Natural killer cell (primary cell): ENCODE measurements at regions of chr6 and their contacts with region 1.

Region 1: GRCh38 chr6:131199568-131200272 is 64.5 kb downstream of the AKAP7 start:
- DNase-seq: peak; percentile 62 to 94
- ATAC-seq: peak; percentile 95 to 99 (median 98)
- H3K4me3 ChIP-seq: peak overlapping the region; percentile 8
- H3K4me3 Mint-ChIP-seq: peak overlapping the region; percentile 87
- H3K27ac ChIP-seq: peak overlapping the region; percentile 72
- H3K27ac Mint-ChIP-seq: peak overlapping the region; percentile 81 to 96
- H3K4me1 ChIP-seq: peaks cover 22% of the 10 kb centered on the region
- H3K4me1 Mint-ChIP-seq: peaks cover 55% of the 10 kb centered on the region in 2 donors
- H3K27me3 ChIP-seq: no peaks in the 10 kb centered on the region
- H3K27me3 Mint-ChIP-seq: no peaks in the 10 kb centered on the region
- CTCF ChIP-seq: peak; percentile 83

Region 2: GRCh38 chr6:131042664-131043063 is 157.1 kb before region 1 on chr6:
- intact Hi-C with region 1: no loop called
- DNase-seq: no peak
- ATAC-seq: no peak
- H3K4me3 ChIP-seq: no peak overlapping the region
- H3K4me3 Mint-ChIP-seq: no peak overlapping the region
- H3K27ac ChIP-seq: no peak overlapping the region
- H3K27ac Mint-ChIP-seq: no peak overlapping the region
- H3K4me1 ChIP-seq: no peaks in the 10 kb centered on the region
- H3K4me1 Mint-ChIP-seq: no peaks in the 10 kb centered on the region
- H3K27me3 ChIP-seq: no peaks in the 10 kb centered on the region
- H3K27me3 Mint-ChIP-seq: peaks cover 0 to 2% of the 10 kb centered on the region in 2 donors
- CTCF ChIP-seq: no peak

Region 3: DNA sequence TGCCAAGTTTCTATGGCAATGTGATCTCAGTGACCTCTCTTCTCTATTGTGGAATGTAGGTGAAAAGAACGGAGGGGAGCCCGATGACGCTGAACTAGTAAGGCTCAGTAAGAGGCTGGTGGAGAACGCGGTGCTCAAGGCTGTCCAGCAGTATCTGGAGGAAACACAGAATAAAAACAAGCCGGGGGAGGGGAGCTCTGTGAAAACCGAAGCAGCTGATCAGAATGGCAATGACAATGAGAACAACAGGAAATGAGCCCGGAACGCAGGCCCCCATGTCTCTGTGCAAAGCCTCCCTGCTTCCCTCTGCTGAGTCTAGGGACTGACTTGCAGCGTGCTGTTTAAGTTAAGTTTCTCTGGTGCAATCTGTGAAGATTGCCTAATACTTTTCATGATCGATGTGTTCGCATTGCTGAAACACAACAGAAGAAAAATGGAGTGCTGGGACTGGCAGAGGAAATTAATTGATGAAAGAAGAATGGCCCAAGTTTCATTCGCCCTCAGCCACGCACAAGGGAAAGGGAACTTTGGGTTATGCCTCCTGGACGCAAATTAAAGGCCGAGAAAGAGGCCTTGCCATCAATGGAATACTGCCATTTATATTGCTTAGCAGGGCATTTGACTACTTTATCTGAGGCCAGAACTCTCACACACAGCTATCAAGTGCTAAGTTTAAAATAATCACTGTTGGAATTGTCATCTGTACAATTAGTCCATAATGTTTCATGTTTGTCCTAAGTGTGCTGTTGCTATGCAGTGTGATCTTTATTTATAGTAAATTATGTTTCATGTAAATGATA is 82.0 kb after region 1 on chr6:
- intact Hi-C with region 1: loop called (anchors 10 kb)
- DNase-seq: peak; percentile 40 to 82
- ATAC-seq: peak; percentile 94 to 97 (median 95)
- H3K4me3 ChIP-seq: peak overlapping the region; percentile 6
- H3K4me3 Mint-ChIP-seq: peak overlapping the region; percentile 86
- H3K27ac ChIP-seq: peak overlapping the region; percentile 58
- H3K27ac Mint-ChIP-seq: peak overlapping the region; percentile 89 to 96
- H3K4me1 ChIP-seq: peaks cover 11% of the 10 kb centered on the region
- H3K4me1 Mint-ChIP-seq: peaks cover 18 to 25% of the 10 kb centered on the region in 2 donors
- H3K27me3 ChIP-seq: no peaks in the 10 kb centered on the region
- H3K27me3 Mint-ChIP-seq: no peaks in the 10 kb centered on the region
- CTCF ChIP-seq: no peak

Region 4: DNA sequence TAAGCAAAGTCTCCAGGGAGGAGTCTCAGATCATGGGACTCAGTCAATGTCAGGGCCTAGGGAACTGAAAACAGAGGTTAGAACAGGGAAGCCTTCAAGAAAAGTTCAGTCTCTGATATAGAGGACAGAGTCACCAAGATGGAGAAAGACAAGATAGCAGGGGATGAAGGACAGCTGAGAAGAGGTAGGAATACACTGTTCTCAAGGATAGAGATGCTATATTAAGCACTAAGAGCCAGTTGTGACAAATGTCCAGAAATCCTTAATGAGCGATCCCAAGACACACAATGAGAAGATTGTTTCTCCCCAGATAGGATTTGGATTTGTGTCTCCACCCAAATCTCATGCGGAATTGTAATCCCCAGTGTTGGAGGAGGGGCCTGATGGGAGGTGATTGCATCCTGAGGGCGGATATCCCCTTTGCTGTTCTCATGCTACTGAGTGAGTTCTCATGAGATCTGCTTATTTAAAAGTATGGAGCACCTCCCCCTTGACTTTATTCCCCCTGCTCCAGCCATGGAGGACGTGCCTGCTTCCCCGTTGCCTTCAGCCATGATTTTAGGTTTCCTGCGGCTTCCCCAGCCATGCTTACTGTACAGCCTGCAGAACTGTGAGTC is 103.7 kb after region 1 on chr6:
- intact Hi-C with region 1: no loop called
- DNase-seq: no peak
- ATAC-seq: no peak
- H3K4me3 ChIP-seq: no peak overlapping the region
- H3K4me3 Mint-ChIP-seq: no peak overlapping the region
- H3K27ac ChIP-seq: no peak overlapping the region
- H3K27ac Mint-ChIP-seq: no peak overlapping the region
- H3K4me1 ChIP-seq: no peaks in the 10 kb centered on the region
- H3K4me1 Mint-ChIP-seq: peaks cover 0 to 13% of the 10 kb centered on the region in 2 donors
- H3K27me3 ChIP-seq: no peaks in the 10 kb centered on the region
- H3K27me3 Mint-ChIP-seq: no peaks in the 10 kb centered on the region
- CTCF ChIP-seq: no peak

Region 5: GRCh38 chr6:131532580-131533039 is 332.9 kb after region 1 on chr6:
- intact Hi-C with region 1: loop called (anchors 1 kb)
- DNase-seq: peak in 1 of 2 donors; percentile 21
- ATAC-seq: no peak
- H3K4me3 ChIP-seq: no peak overlapping the region
- H3K4me3 Mint-ChIP-seq: no peak overlapping the region
- H3K27ac ChIP-seq: no peak overlapping the region
- H3K27ac Mint-ChIP-seq: peak overlapping the region in 1 of 2 donors; percentile 63
- H3K4me1 ChIP-seq: no peaks in the 10 kb centered on the region
- H3K4me1 Mint-ChIP-seq: peaks cover 11 to 13% of the 10 kb centered on the region in 2 donors
- H3K27me3 ChIP-seq: no peaks in the 10 kb centered on the region
- H3K27me3 Mint-ChIP-seq: peaks cover 4 to 7% of the 10 kb centered on the region in 2 donors
- CTCF ChIP-seq: no peak

Region 6: GRCh38 chr6:131597446-131597845 is 397.7 kb after region 1 on chr6:
- intact Hi-C with region 1: loop called (anchors 1 kb)
- DNase-seq: peak in 1 of 2 donors; percentile 43
- ATAC-seq: peak in 2 of 3 donors; percentile 58 to 61
- H3K4me3 ChIP-seq: no peak overlapping the region
- H3K4me3 Mint-ChIP-seq: no peak overlapping the region
- H3K27ac ChIP-seq: no peak overlapping the region
- H3K27ac Mint-ChIP-seq: no peak overlapping the region
- H3K4me1 ChIP-seq: no peaks in the 10 kb centered on the region
- H3K4me1 Mint-ChIP-seq: no peaks in the 10 kb centered on the region
- H3K27me3 ChIP-seq: no peaks in the 10 kb centered on the region
- H3K27me3 Mint-ChIP-seq: no peaks in the 10 kb centered on the region
- CTCF ChIP-seq: peak; percentile 33

Region 7: GRCh38 chr6:131627724-131628682 is 428.3 kb after region 1 on chr6 and contains the start of gene MED23:
- intact Hi-C with region 1: loop called (anchors 10 kb)
- DNase-seq: peak; percentile 92 to 96
- ATAC-seq: peak; percentile 91 to 97 (median 96)
- H3K4me3 ChIP-seq: peak within 1 kb of the TSS; percentile 84
- H3K4me3 Mint-ChIP-seq: peak within 1 kb of the TSS; percentile 100
- H3K27ac ChIP-seq: peak within 1 kb of the TSS; percentile 54
- H3K27ac Mint-ChIP-seq: peak within 1 kb of the TSS; percentile 94 to 95
- H3K4me1 ChIP-seq: peaks cover 3% of the 10 kb centered on the region
- H3K4me1 Mint-ChIP-seq: peaks cover 25 to 34% of the 10 kb centered on the region in 2 donors
- H3K27me3 ChIP-seq: no peaks in the 10 kb centered on the region
- H3K27me3 Mint-ChIP-seq: no peaks in the 10 kb centered on the region
- CTCF ChIP-seq: peak; percentile 84
- total RNA-seq, gene MED23: 63.8 to 71.2 (median 67.4) TPM